Posterior vena cava (tissue), 2 donors: ENCODE measurements at regions of chr17 and their contacts with region 1.

Region 1: DNA sequence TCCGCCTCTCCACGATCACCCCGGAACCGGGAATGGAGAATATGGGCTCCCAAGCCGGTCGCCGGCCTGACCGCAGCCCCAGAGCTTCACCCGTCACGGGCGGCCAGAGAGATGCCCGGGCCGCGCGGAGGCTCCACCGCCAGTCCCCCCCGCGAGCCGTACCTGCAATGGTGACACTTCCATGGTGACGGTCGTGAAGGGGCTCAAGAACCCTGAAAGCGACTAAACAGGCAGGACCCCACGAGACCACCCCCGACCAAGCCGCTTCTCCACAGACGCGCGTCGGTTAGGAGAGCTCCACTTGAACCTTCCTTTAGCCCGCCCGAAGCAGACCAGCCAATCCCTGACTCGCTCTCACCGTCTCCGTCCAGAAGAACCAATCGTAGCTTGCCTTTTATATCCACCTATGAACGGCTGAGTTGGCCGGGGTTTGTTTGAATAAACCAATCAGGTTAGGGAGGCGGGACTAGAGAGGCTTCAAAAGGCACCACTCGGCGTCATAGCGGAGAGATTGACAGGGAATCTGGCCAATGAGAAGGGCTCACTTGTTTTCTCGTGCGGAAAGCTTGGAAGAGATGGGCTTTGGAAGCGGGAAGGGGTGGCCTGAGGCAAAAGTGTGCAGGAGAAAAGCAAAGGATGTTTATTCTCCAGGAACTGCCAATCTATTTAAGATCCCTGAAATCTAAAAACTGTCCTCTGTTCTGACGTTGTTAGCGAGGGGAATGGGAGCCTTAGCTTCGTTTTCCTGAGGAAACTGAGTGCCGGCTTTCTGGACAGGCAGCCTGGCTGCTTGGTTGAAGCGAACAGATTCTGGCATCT is at the start of gene TOP2A:
- DNase-seq: peak; percentile 96
- total RNA-seq, gene TOP2A: 1.1 to 2.2 TPM

Region 2: DNA sequence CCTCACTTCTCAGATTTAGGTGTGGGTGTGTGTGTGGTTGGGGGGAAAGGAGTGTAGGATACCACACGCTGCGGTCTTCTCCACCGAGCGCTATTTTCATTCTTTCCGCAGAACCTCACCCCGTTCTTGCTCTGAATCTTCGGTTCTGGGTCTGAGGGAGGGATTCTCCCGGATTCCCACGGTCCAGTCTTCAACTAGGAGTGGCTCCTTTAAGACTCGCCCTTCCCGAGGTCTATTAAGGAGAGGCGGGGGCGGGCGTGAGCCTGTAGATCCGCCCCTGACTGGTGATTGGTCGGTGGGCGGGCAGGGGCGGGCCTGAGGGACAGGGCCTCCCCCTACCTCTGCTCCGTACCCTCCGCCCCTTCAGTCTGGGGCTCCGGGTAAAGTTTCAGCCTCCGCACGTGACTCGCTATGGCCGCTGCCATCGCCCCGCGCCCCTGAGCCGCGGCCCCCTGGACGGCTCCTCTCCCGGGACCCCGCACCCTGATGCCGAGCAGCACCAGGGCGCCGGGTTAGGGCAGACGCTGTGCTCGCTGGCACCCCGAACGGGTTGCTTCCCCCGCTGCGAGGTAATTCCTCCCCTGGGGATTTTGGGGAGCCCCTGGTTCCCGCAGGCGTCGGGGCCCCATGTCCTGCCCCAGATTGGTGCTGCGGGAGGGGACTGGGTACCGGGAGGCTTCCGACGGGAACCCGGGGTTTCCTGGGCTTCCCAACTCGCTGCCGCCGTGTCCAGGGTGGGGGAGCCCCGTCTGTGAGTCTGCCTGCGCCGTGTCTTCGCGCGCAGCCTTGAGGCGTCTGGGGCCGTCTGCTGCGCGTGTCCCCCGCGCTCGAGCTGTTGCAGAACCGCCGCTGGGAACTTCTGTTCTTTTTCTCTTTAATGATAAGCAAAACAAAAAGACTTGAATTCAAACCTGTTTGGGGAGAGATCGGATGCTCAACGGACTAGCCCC is 99.7 kb before region 1 on chr17:
- intact Hi-C with region 1: loop called in 1 of 2 experiments (anchors 10 kb)
- DNase-seq: peak; percentile 98

Region 3: DNA sequence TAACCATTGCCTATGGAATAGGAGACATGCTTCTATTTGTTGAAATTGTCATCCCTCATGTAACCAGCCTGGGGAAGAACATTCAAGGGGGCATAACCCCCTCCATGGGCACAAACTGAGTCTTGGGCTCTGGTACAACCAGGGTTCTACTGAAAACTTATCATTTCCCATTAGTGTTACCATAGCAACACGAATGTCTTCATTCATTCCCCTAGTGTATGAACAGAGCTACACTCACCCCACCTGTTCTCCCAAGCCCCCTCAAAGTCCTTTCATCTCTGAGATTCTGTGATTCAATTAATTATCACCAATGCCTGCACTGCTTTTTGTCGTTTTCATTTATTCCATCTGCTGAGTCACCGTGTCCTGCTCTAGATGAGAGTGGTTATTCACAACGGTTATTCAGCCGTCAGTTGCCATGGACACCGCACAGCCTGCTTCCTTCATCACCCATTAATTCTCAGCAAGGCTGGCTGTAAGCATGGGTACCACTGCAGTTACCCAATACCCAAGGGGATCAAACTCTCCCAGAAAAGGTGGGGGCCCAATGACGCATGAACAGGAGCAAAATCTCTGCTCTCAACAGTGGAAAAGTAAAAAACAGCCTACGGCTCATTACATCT is 1292.8 kb after region 1 on chr17:
- intact Hi-C with region 1: no loop called
- DNase-seq: no peak